ENCODE measurements at regions of chr20 and their contacts with region 1.

Region 1: DNA sequence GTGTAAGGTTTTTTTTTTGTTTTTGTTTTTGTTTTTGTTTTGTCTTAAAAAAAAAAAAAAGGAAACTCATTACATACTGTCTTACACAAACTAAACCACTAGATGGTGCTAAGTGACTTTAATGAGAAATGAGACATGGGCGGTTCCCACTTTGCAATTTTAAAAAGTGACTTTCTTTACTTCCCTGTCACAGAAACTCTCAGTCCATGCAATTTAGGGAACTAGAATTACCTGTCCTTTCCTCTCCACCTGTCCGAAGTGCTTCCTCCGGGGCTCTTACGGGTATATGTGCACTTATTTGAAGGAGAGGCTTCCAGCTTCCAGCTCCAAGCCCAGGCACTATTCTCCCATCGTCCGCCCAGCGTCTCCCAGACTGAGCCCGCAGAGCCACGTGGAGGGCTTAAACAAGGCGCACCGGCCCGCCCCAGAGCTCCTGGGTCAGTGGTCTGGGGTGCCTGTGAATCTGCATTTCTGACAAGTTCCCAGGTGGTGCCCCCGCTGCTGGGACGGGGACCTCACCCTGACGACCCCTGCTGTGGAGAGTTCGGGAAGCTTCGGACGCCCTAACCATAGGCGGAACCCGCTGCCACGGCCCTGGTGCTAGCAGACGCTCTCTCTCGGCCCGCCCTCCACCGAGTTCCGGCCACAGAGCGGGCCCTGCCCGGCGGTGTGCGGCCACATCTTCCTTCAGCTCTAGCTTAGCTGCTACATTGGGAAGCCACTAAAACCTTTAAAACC is 26.1 kb downstream of the BFSP1 start:
- DNase-seq: peak; percentile 65
- H3K4me3 ChIP-seq: peak overlapping the region; percentile 37 to 59 (median 41)
- H3K27ac ChIP-seq: peak overlapping the region; percentile 23 to 64 (median 56)
- H3K4me1 ChIP-seq: peaks cover 0 to 14% (median 12%) of the 10 kb centered on the region in 4 donors
- H3K27me3 ChIP-seq: no peaks in the 10 kb centered on the region
- CTCF ChIP-seq: peak; percentile 66 to 87 (median 73)
- EP300 ChIP-seq: no peak
- POLR2A ChIP-seq: no peak

Region 2: DNA sequence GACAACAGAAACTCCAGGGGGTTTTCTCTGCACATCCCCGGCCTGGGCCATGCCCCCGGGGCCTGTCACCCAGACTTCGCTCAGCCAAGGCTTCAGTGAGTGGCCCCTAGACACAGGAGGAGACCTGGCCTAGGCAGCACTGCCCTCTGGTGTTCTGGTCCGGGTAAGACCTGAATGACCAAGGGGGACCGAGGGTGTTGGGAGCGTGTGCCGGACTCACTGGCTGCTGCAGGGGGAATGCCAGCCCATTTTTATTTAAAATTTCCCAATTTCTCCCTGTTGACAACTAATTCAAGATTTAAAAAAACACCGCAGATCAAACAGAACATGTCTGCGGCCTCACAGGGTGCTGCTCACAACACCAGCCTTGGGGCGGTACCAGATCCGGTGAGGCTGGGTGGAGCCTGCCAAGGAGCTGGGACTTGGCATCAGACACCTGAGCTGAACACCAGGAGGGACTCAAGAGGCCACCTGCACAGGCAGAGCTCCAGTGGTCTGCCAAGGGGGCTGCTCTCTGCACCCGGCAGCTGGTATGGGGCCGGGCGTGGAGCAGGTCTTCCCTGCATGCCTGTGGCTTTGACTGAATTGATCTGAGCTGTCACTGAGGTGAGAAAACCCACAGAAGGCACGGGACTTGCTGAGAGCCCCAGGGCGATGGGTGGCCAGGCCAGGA is 112.6 kb after region 1 on chr20:
- in situ Hi-C with region 1: no loop called
- intact Hi-C with region 1: loop called (anchors 2 kb)
- DNase-seq: peak; percentile 49
- H3K4me3 ChIP-seq: no peak overlapping the region
- H3K27ac ChIP-seq: no peak overlapping the region
- H3K4me1 ChIP-seq: peaks cover 4 to 40% (median 26%) of the 10 kb centered on the region in 4 donors
- H3K27me3 ChIP-seq: no peaks in the 10 kb centered on the region
- CTCF ChIP-seq: peak; percentile 52 to 74 (median 61)
- EP300 ChIP-seq: no peak
- POLR2A ChIP-seq: no peak

Region 3: GRCh38 chr20:17904027-17904426 is 399.0 kb after region 1 on chr20:
- in situ Hi-C with region 1: loop called in 2 of 4 experiments (anchors 10 to 25 kb)
- intact Hi-C with region 1: loop called (anchors 10 kb)
- DNase-seq: no peak
- H3K4me3 ChIP-seq: no peak overlapping the region
- H3K27ac ChIP-seq: no peak overlapping the region
- H3K4me1 ChIP-seq: no peaks in the 10 kb centered on the region
- H3K27me3 ChIP-seq: no peaks in the 10 kb centered on the region
- CTCF ChIP-seq: no peak
- EP300 ChIP-seq: no peak
- POLR2A ChIP-seq: no peak

Region 4: GRCh38 chr20:17910828-17911294 is 405.8 kb after region 1 on chr20:
- in situ Hi-C with region 1: loop called in 2 of 4 experiments (anchors 10 to 25 kb)
- intact Hi-C with region 1: loop called (anchors 10 kb)
- DNase-seq: no peak
- H3K4me3 ChIP-seq: no peak overlapping the region
- H3K27ac ChIP-seq: peak overlapping the region; percentile 50 to 72 (median 65)
- H3K4me1 ChIP-seq: peaks cover 2 to 18% (median 4%) of the 10 kb centered on the region in 4 donors
- H3K27me3 ChIP-seq: no peaks in the 10 kb centered on the region
- CTCF ChIP-seq: no peak
- EP300 ChIP-seq: no peak
- POLR2A ChIP-seq: no peak

Region 5: DNA sequence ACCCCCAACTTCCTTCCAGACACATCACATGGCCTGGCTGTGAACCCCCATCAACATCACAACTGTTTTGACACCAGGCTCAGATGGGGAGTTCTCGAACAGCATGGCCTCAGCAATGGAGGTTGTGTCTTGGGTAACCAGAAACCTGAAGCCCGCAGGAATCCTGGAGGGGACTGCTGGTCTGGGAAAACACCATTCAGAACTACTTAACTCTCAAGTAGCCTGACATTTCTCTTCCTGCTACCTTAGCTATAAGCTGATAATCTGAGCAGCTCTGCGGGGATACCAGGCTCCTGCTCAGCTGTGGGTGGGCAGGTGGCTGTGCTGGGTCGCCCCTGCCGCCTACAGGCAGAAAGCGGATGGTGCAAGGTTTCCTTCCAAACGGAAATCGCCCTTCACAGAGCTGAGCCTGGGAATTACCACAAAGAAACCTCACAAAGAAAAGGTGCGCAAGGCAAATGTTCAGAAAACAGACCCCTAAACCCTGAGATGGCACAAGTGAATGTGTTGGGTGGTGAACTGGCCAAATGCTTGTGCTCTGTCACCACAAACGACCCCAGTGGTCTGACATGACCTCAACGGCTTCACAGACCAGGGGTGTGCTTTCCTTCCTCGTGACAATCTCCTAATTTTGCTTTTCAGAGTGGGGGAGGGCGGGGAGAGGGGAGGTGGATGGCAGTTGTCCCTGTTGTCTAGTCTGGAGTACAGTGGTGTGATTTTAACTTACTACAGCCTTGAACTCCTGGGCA is 434.0 kb after region 1 on chr20:
- in situ Hi-C with region 1: loop called in 1 of 4 experiments (anchors 25 kb)
- intact Hi-C with region 1: no loop called
- DNase-seq: peak; percentile 78
- H3K4me3 ChIP-seq: no peak overlapping the region
- H3K27ac ChIP-seq: peak overlapping the region; percentile 40 to 73 (median 62)
- H3K4me1 ChIP-seq: peaks cover 19 to 43% (median 26%) of the 10 kb centered on the region in 4 donors
- H3K27me3 ChIP-seq: no peaks in the 10 kb centered on the region
- CTCF ChIP-seq: peak; percentile 86 to 94 (median 89)
- EP300 ChIP-seq: no peak
- POLR2A ChIP-seq: no peak

Region 6: GRCh38 chr20:17995967-17996819 is 491.1 kb after region 1 on chr20:
- in situ Hi-C with region 1: loop called in 2 of 4 experiments (anchors 10 to 25 kb)
- intact Hi-C with region 1: no loop called
- DNase-seq: no peak
- H3K4me3 ChIP-seq: no peak overlapping the region
- H3K27ac ChIP-seq: no peak overlapping the region
- H3K4me1 ChIP-seq: peaks cover 0 to 15% (median 3%) of the 10 kb centered on the region in 4 donors
- H3K27me3 ChIP-seq: no peaks in the 10 kb centered on the region
- CTCF ChIP-seq: peak; percentile 96 to 98 (median 98)
- EP300 ChIP-seq: no peak
- POLR2A ChIP-seq: no peak

Region 7: GRCh38 chr20:18287915-18288748 is 783.1 kb after region 1 on chr20 and contains the start of gene ZNF133:
- in situ Hi-C with region 1: loop called (anchors 25 kb)
- intact Hi-C with region 1: no loop called
- DNase-seq: peak; percentile 98
- H3K4me3 ChIP-seq: peak within 1 kb of the TSS; percentile 63 to 80 (median 74)
- H3K27ac ChIP-seq: peak within 1 kb of the TSS; percentile 86 to 93 (median 90)
- H3K4me1 ChIP-seq: peaks cover 0 to 19% (median 12%) of the 10 kb centered on the region in 4 donors
- H3K27me3 ChIP-seq: no peaks in the 10 kb centered on the region
- CTCF ChIP-seq: no peak
- EP300 ChIP-seq: no peak
- POLR2A ChIP-seq: peak; percentile 76
- total RNA-seq, gene ZNF133: 12.7 to 24.3 (median 17.5) TPM

Measured in transverse colon (tissue), 4 donors.